Head of caudate nucleus (tissue), 42 donors: ENCODE measurements at regions of chr12 and their contacts with region 1.

Region 1: GRCh38 chr12:110600254-110600653 is 13.7 kb upstream of the TCTN1 start:
- DNase-seq: peak in 1 of 42 donors; percentile 10

Region 2: DNA sequence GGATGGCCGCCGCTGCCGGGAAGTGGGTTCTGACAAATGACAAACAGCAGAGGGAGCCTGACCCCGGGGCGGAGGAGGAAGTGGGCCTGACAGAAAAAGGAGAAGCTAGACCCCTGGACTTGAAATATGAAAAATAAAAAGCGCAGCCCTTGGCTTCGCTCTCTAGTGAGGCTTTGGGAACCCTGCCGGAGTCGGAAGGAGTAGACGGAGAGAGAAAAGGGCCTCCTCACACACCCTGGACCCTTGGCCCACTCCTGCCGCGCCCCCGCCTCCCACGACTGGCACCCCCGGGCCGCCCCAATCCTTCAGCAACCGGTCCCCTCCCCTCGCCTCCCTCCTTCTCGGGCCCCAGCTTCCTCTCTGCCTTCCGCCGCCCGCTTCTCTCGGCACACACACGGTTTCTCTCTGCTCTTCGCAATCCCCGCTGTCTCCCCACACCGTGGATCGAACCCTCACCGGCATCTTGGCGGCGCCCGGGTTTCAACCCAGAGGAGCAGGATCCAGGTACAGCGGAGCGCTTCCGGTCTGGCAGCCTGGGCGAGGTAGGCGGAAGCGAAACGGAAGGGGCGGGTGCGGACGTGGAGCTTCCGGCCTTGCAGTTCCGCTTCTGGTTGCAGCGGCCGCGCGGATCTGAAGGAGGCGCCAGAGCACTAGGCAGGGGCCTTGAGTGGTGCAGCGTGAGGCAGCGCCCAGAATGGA is 150.3 kb before region 1 on chr12 and contains the start of gene ARPC3:
- intact Hi-C with region 1: loop called (anchors 5 kb)
- DNase-seq: peak; percentile 88 to 98 (median 95)

Region 3: GRCh38 chr12:110549716-110550115 is 50.5 kb before region 1 on chr12:
- intact Hi-C with region 1: loop called (anchors 5 kb)
- DNase-seq: no peak

Region 4: DNA sequence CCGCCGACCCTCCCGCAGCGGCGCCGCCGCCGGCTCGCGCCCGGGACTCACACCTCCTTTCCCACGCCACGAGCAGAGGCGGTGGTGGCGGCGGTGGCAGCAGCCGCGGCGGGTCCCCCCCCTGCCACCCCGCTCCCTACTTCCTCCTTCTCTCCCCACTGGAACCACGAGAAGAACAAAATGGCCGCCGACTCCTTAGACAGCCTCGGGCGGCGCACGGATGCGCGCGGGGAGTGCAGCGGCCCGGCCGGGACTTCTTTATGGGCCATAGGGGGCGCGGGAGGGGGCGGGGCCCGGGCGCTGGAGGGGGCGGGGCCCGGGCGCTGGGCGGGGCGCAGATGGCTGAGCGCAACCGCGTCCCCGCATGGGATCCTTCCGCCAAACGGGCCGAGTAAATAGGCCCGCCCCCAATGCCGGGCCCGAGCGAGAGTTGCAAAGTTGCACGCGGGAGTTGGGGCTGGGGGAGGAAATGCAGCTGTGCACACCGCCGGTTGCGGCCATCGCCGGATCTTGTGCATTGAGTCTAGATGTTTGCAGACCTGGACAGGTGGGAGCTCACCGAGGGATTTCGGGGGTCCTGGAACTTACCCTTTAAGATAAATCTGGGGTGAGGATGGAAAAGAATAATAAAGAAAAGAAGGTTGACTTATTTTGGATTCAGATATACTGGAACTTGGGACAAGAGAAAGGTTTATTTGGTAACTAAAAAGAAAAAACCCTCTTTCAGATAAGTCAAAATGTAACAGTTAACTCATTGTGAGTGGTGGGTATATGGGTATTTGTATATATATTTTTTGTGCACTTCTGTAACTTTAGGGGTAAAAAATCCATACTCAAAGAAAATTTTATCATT is 142.7 kb after region 1 on chr12 and contains the start of gene PPP1CC:
- intact Hi-C with region 1: no loop called
- DNase-seq: peak; percentile 86 to 97 (median 94)